MCF 10A (cell line): ENCODE measurements at regions of chr4 and their contacts with region 1.

Region 1: DNA sequence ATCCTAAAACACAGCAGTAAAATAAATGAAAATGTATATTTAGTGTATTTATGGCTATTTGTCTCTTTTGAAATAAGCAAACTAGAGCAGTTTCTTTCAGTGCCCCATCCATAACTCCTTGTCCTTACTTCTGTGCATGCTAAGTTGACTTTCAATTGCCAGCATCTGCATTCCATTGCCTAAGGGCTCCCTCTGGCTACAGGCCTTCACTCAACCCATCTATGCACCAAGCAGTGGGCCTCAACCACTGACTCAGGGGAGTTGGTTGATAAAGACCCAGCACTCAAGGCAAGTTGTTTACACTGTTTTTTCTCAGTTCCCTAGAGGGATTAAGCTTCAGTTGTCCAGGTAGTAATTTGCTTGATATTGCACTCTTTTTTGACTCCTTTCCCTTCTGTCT is 265.7 kb downstream of the IQCM start:
- DNase-seq: peak; percentile 26
- H3K4me3 Mint-ChIP-seq: no peak overlapping the region
- H3K27ac Mint-ChIP-seq: no peak overlapping the region
- H3K4me1 Mint-ChIP-seq: no peaks in the 10 kb centered on the region
- H3K27me3 Mint-ChIP-seq: no peaks in the 10 kb centered on the region
- CTCF ChIP-seq: no peak

Region 2: GRCh38 chr4:149370785-149371420 is 179.0 kb before region 1 on chr4:
- CTCF ChIA-PET with region 1: interaction called, 4 read pairs
- POLR2A ChIA-PET with region 1: no interaction called
- intact Hi-C with region 1: loop called (anchors 1 kb)
- DNase-seq: peak; percentile 72
- H3K4me3 Mint-ChIP-seq: no peak overlapping the region
- H3K27ac Mint-ChIP-seq: no peak overlapping the region
- H3K4me1 Mint-ChIP-seq: no peaks in the 10 kb centered on the region
- H3K27me3 Mint-ChIP-seq: no peaks in the 10 kb centered on the region
- CTCF ChIP-seq: peak; percentile 55